Activated naive CD4-positive, alpha-beta T cell treated with anti-CD3 and anti-CD28 coated beads for 36 hours (primary cell): ENCODE measurements at regions of chr9 and their contacts with region 1.

Region 1: GRCh38 chr9:107137495-107138202 is 145.4 kb upstream of the RAD23B start:
- DNase-seq: peak; percentile 8
- H3K4me3 Mint-ChIP-seq: no peak overlapping the region
- H3K27ac Mint-ChIP-seq: no peak overlapping the region
- H3K4me1 Mint-ChIP-seq: no peaks in the 10 kb centered on the region
- H3K27me3 Mint-ChIP-seq: peaks cover 3% of the 10 kb centered on the region

Region 2: GRCh38 chr9:107007361-107007760 is 130.3 kb before region 1 on chr9:
- CTCF ChIA-PET with region 1: no interaction called
- intact Hi-C with region 1: no loop called
- DNase-seq: no peak
- H3K4me3 Mint-ChIP-seq: no peak overlapping the region
- H3K27ac Mint-ChIP-seq: no peak overlapping the region
- H3K4me1 Mint-ChIP-seq: no peaks in the 10 kb centered on the region
- H3K27me3 Mint-ChIP-seq: no peaks in the 10 kb centered on the region

Region 3: DNA sequence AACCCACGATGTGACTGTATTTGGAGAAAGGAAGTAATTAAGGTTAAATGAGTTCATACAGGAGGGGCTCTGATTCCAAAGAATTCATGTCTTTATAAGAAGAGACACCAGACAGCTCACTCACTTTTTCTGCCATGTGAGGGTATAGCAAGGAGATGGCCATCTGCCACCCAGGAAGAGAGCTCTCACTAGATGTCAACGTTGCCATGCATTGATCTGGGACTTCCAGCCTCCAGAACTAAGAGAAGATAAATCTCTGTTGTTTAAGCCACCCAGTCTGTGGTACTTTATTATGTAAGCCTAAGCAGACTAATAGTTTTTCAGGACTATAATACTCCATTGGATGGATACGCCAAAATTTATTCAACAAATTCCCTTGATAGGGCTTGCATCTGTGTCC is 55.6 kb after region 1 on chr9:
- CTCF ChIA-PET with region 1: no interaction called
- intact Hi-C with region 1: no loop called
- DNase-seq: no peak
- H3K4me3 Mint-ChIP-seq: no peak overlapping the region
- H3K27ac Mint-ChIP-seq: no peak overlapping the region
- H3K4me1 Mint-ChIP-seq: no peaks in the 10 kb centered on the region
- H3K27me3 Mint-ChIP-seq: peaks cover 7% of the 10 kb centered on the region

Region 4: DNA sequence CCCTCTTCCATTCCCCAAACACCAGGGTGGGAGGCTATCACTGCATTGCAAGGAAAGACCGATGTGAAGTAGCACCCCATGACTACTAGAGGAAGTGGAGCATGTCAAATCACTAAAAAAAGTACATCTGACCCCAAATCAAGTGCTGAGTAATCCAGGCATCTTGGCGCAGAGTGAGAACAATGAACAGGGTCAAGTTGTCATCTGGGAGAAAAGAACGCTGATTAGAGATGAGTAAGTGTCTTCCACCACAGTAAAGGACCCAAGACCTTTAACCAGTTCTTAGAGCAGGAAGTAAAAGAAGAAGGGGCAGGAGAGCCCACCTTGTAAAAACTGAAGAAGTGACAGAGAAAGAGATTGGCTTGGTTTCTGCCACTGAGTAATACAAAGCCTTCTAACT is 70.5 kb after region 1 on chr9:
- CTCF ChIA-PET with region 1: no interaction called
- intact Hi-C with region 1: loop called (anchors 10 kb)
- DNase-seq: no peak
- H3K4me3 Mint-ChIP-seq: no peak overlapping the region
- H3K27ac Mint-ChIP-seq: no peak overlapping the region
- H3K4me1 Mint-ChIP-seq: peaks cover 2% of the 10 kb centered on the region
- H3K27me3 Mint-ChIP-seq: peaks cover 13% of the 10 kb centered on the region